ENCODE measurements at regions of chr22 and their contacts with region 1.

Region 1: DNA sequence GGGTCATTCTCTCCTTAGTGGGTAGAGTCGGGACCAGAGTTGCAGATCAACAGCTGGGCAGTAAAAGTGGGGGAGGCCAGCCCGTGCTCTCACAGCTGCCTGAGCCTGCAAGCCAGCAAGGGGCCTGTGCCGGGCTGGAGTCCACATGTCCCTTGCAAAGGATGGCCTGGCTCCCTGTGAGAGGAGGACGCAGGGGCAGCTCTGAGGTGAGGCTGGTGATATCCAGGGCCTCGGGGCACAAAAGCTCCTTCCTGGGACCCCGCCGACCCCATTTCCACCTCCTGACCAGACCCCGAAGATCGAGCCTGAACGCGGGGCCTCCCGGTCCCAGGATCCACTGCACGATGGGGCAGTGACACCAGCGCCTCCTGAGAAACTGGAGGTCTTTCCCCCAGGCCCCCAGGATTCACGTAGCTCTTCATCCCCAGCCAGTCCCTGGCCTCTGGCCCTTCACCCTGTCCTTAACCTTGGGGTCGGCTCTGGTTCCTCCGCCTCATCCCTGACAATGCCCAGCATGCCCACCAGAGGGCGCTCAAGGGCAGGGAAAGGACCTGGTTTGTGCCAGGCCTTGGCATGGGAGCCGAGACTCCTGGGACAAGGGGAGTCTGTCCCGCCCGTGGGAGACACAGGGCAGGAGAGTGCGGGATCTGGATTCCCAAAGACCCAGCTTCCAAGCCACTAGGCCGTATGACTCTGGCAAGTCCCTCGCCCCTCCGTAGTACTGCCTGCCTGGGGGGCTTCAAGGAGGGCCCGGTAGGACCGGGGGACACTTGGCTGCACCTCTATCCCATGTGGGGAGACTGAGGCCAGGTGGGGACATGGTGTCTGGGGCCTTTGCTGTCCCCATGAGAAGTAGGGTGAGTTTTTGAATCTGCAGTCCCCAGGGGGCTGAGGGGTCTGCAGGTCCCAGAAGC is 17.8 kb upstream of the WNT7B start:
- DNase-seq: peak; percentile 52 to 82
- H3K4me3 ChIP-seq: no peak overlapping the region
- H3K27ac ChIP-seq: no peak overlapping the region
- H3K4me1 ChIP-seq: peaks cover 14% of the 10 kb centered on the region
- H3K27me3 ChIP-seq: no peaks in the 10 kb centered on the region
- CTCF ChIP-seq: peak; percentile 98

Region 2: DNA sequence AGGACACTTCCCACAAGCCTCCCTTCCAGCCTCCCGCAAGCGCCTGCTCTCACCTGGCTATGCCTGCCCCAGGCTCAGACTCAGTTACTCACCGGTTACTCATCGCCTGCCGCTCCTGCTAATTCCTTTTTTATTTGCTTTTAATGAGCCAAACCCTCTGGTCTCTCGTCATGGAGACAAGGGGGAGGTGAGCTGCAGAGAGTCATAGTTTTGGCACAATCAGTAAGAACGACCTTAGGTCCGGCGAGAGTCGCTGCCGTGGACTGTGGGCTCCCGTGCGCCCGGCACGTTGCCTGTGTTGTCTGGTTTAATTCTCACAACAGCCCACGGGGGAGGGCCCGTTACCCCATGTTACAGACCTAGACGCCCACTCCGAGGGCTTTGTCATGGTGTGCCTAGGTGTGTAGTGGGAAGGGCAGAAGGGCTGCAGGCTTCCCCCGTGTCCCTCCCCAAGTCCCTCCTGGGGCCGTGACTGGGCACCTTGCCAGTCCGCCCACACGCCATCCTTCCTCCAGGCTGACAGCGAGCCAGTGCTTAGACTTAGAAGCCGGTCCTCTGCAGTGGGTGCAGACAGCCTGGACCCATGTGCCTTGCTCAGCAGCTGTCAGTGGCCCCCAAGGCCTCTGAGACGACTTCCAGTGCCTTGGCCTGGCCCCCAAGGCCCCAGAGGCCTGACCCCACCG is 59.9 kb before region 1 on chr22:
- CTCF ChIA-PET with region 1: no interaction called
- POLR2A ChIA-PET with region 1: no interaction called
- intact Hi-C with region 1: no loop called
- DNase-seq: peak; percentile 84 to 97
- H3K4me3 ChIP-seq: peak overlapping the region; percentile 47; the same call in 1 of the 2 replicates
- H3K27ac ChIP-seq: peak overlapping the region; percentile 78
- H3K4me1 ChIP-seq: peaks cover 37% of the 10 kb centered on the region
- H3K27me3 ChIP-seq: no peaks in the 10 kb centered on the region
- CTCF ChIP-seq: no peak

Region 3: GRCh38 chr22:45984316-45984916 is 10.3 kb before region 1 on chr22:
- CTCF ChIA-PET with region 1: no interaction called
- POLR2A ChIA-PET with region 1: no interaction called
- intact Hi-C with region 1: no loop called
- DNase-seq: no peak
- H3K4me3 ChIP-seq: no peak overlapping the region
- H3K27ac ChIP-seq: no peak overlapping the region
- H3K4me1 ChIP-seq: peaks cover 4% of the 10 kb centered on the region
- H3K27me3 ChIP-seq: no peaks in the 10 kb centered on the region
- CTCF ChIP-seq: no peak

Region 4: DNA sequence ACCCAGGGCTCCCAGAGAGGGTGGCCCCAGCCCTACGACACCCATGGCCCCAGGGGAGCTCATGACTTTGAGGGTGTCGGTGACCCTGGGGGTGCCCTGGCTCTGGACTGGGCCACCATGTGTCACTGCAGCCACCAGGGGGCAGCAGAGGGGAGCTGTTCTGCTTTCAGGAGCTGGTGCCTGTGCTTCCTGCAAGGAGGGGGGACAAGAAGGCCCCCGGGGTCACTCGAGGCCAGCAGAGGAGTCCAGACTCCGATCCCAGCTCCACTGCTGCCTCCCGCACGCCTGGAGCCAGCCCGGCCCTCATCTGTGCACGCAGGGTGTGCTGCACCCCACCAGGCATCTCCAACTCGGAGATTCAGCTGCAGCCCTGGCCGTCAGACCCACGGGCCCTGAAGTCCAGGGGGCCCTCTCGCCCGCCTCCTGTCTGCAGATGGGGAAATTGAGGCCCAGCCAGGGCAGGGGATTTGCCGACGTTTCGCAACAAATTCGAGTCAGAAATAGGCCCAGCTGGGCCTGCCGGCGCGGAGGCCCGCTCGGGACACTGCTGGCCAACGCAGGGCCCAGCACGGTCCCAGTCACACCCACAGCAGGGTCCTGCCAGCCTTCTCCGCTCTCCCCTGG is 11.7 kb after region 1 on chr22:
- CTCF ChIA-PET with region 1: interaction called, 32 read pairs
- POLR2A ChIA-PET with region 1: interaction called, 3 read pairs
- intact Hi-C with region 1: no loop called
- DNase-seq: peak; percentile 77 to 90
- H3K4me3 ChIP-seq: peak overlapping the region; percentile 61
- H3K27ac ChIP-seq: peak overlapping the region; percentile 73
- H3K4me1 ChIP-seq: peaks cover 26% of the 10 kb centered on the region
- H3K27me3 ChIP-seq: no peaks in the 10 kb centered on the region
- CTCF ChIP-seq: peak; percentile 98

Region 5: GRCh38 chr22:46035742-46036557 is 41.2 kb after region 1 on chr22:
- CTCF ChIA-PET with region 1: no interaction called
- POLR2A ChIA-PET with region 1: no interaction called
- intact Hi-C with region 1: loop called (anchors 5 kb)
- DNase-seq: peak; percentile 96 to 99
- H3K4me3 ChIP-seq: peak overlapping the region; percentile 99
- H3K27ac ChIP-seq: peak overlapping the region; percentile 34; the same call in 1 of the 2 replicates
- H3K4me1 ChIP-seq: peaks cover 15% of the 10 kb centered on the region
- H3K27me3 ChIP-seq: no peaks in the 10 kb centered on the region
- CTCF ChIP-seq: no peak

Region 6: GRCh38 chr22:46116491-46116958 is 121.8 kb after region 1 on chr22:
- CTCF ChIA-PET with region 1: interaction called, 4 read pairs
- POLR2A ChIA-PET with region 1: no interaction called
- intact Hi-C with region 1: loop called (anchors 1 kb)
- DNase-seq: peak; percentile 72 to 91
- H3K4me3 ChIP-seq: no peak overlapping the region
- H3K27ac ChIP-seq: no peak overlapping the region
- H3K4me1 ChIP-seq: no peaks in the 10 kb centered on the region
- H3K27me3 ChIP-seq: no peaks in the 10 kb centered on the region
- CTCF ChIP-seq: peak; percentile 96

Region 7: DNA sequence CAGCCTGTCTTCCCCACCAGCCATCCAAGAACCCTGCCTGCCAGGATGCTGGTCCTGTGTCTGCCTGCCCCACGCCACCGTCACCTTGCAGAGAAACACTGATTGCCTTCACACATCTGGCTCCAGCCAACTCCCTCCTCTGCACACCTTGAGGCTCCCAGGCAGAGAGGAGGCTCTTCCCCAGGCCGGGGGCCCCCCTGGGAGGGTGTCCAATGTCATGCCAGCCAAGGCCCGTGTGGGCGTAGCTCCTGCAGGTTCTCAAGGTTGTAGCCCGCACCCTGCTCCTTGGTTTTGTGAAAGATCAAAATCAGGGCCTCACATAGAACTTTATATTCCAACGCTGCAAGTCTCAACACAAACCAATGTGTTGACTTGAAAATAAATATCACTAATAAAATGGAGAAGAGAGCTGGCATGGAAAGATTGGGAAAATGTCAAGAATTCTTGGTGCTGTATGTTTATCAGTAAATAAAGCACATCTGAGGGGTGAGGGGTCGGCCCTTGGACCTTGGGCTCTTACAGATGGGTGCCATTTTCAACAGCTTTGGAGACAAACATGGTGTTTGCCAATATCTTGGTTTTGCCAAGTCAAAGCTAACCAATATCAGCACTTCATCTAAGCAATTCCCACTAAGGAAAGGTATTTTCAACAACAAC is 148.9 kb after region 1 on chr22:
- CTCF ChIA-PET with region 1: no interaction called
- POLR2A ChIA-PET with region 1: interaction called, 10 read pairs
- intact Hi-C with region 1: no loop called
- DNase-seq: no peak
- H3K4me3 ChIP-seq: no peak overlapping the region
- H3K27ac ChIP-seq: no peak overlapping the region
- H3K4me1 ChIP-seq: 0 out of 2 replicates have a peak, but pooled peaks cover 5% of the 10 kb centered on the region
- H3K27me3 ChIP-seq: peaks cover 16% of the 10 kb centered on the region
- CTCF ChIP-seq: no peak

Region 8: GRCh38 chr22:46156031-46156430 is 161.3 kb after region 1 on chr22:
- CTCF ChIA-PET with region 1: no interaction called
- POLR2A ChIA-PET with region 1: no interaction called
- intact Hi-C with region 1: no loop called
- DNase-seq: no peak
- H3K4me3 ChIP-seq: no peak overlapping the region
- H3K27ac ChIP-seq: no peak overlapping the region
- H3K4me1 ChIP-seq: peaks cover 9% of the 10 kb centered on the region
- H3K27me3 ChIP-seq: no peaks in the 10 kb centered on the region
- CTCF ChIP-seq: no peak

Region 9: DNA sequence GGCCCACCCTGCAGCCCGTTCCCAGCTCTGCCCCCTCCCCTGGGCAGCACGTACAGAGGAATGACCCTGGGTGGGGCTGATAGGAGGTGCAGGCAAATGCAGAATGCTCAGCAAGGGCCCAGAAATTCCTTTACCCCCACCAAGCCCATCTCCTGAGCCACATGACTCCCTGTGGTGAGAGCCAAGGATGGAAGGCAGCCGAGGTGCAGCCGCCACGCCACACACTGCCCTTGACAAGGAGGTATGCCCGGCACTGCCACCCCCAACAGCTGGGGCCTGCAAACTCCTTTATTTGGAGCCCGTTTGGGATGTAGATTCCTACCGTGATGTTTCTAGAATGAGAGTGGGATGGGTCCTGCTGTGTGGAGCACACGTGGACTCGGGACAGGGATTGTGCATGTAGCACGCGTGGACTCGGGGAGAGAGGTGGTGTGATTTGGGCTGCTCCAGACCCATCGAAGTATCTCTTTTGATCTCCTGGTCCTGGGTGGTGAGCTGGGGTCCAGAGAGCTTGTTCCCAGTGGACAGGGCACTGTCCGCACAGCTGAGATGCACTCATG is 314.9 kb after region 1 on chr22:
- CTCF ChIA-PET with region 1: no interaction called
- POLR2A ChIA-PET with region 1: no interaction called
- intact Hi-C with region 1: loop called (anchors 5 kb)
- DNase-seq: no peak
- H3K4me3 ChIP-seq: no peak overlapping the region
- H3K27ac ChIP-seq: no peak overlapping the region
- H3K4me1 ChIP-seq: no peaks in the 10 kb centered on the region
- H3K27me3 ChIP-seq: no peaks in the 10 kb centered on the region
- CTCF ChIP-seq: no peak